ENCODE measurements at regions of chr1 and their contacts with region 1.

Region 1: DNA sequence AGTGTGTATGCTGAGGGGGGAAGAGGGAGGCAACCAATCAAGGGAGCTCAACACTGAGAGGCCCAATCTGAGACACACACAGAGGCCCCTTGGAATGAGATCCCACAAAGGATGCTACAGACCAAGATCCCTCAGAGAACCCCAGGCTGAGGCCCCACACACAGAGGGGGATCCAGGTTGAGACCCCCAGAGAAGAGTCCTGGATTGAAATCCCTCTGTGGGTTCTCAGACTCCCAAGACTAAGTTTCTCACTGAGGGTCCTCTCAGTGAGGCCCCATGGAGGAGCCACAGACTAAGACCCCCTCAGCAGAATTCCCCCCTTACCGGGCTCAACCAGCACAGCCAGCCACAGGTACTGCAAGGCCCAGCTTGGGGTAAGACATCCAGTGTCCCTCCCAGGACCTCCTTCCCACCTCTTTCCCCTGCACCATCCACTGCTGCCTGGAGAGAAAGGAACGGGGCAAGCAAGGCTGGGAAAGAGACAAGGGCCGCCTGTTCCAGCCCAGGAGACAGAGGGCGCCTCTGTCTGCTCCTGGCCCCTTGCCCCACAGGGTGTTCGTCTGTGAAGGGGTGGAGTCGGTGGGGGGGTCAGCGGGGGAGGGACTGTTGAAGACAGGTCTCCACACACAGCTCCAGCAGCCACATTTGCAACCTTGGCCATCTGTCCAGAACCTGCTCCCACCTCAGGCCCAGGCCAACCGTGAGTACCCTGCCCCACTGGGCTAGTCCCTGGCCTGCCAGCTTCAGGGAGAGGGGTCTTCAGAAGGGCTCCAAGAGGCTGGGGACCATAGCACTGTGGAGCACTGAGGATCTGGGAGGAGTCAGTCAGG is at the start of gene S100A1:
- DNase-seq: peak; percentile 80
- ATAC-seq: peak; percentile 52
- total RNA-seq, gene S100A1: 2,065 TPM

Region 2: GRCh38 chr1:153597206-153597605 is 30.8 kb before region 1 on chr1:
- intact Hi-C with region 1: no loop called
- DNase-seq: no peak
- ATAC-seq: no peak

Region 3: GRCh38 chr1:153612755-153613331 is 15.2 kb before region 1 on chr1 and contains the start of gene S100A16:
- intact Hi-C with region 1: loop called (anchors 2 kb)
- DNase-seq: peak; percentile 81
- ATAC-seq: peak; percentile 91
- total RNA-seq, gene S100A16: 49.2 TPM

Region 4: DNA sequence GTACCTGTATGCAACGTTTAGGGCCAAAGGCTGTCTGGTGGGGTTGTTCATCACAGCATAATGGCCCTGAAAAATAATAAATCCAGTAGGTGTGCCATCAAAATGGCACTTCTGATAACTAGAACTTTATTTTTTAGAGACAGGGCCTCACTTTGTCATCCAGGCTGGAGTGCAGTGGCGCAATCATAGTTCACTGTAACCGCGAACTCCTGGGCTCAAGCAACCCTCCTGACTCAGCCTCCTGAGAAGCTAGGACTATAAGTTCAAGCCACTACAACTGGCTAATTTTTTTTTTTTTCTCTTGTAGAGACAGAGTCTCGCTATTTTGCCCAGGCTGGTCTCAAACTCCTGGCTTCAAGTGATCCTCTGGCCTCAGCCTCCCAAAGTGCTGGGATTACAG is 35.2 kb after region 1 on chr1:
- intact Hi-C with region 1: no loop called
- DNase-seq: no peak
- ATAC-seq: no peak

Region 5: GRCh38 chr1:153805042-153805745 is 177.2 kb after region 1 on chr1:
- intact Hi-C with region 1: no loop called
- DNase-seq: no peak
- ATAC-seq: peak; percentile 86

Measured in Right ventricle myocardium inferior (tissue), 1 donor.